ENCODE measurements at regions of chr9 and their contacts with region 1.

Region 1: DNA sequence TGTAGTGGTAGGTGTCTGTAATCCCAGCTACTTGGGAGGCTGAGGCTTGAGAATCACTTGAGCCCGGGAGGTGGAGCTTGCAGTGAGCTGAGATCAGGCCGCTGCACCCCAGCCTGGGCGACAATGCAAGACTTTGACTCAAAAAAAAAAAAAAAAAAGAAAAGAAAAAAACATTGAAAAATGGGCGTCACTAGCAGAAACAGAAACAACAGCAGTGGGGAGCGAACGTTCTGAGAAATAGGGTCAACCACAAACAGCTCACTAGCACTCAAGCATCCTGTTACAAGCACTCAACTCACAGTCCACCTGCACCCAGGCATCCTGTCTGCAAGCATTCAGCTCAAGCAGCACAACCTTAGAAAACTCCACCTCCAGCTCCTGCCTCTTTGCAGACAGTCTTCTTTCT is 17.2 kb downstream of the TRIM14 start:
- DNase-seq: no peak

Region 2: GRCh38 chr9:98010445-98010844 is 91.4 kb before region 1 on chr9:
- in situ Hi-C with region 1: loop called (anchors 10 kb)
- DNase-seq: peak; percentile 33